ENCODE measurements at regions of chr20 and their contacts with region 1.

Region 1: GRCh38 chr20:49982346-49983122 is at the start of gene SNAI1:
- DNase-seq: peak; percentile 89
- ATAC-seq: peak; percentile 91
- H3K4me3 Mint-ChIP-seq: peak within 1 kb of the TSS; percentile 52
- H3K27ac Mint-ChIP-seq: peak within 1 kb of the TSS; percentile 26
- H3K4me1 Mint-ChIP-seq: peaks cover 15% of the 10 kb centered on the region
- H3K27me3 Mint-ChIP-seq: peaks cover 7% of the 10 kb centered on the region
- total RNA-seq, gene SNAI1: 0.25 to 0.34 TPM

Region 2: GRCh38 chr20:49936153-49937027 is 46.1 kb before region 1 on chr20 and contains the start of gene RNF114:
- CTCF ChIA-PET with region 1: interaction called, 8 read pairs
- POLR2A ChIA-PET with region 1: no interaction called
- intact Hi-C with region 1: loop called in 1 of 2 experiments (anchors 1 kb)
- DNase-seq: peak; percentile 96
- ATAC-seq: peak; percentile 93
- H3K4me3 Mint-ChIP-seq: peak within 1 kb of the TSS; percentile 85
- H3K27ac Mint-ChIP-seq: peak within 1 kb of the TSS; percentile 85
- H3K4me1 Mint-ChIP-seq: peaks cover 41% of the 10 kb centered on the region
- H3K27me3 Mint-ChIP-seq: no peaks in the 10 kb centered on the region
- total RNA-seq, gene RNF114: 47.5 to 66.6 TPM

Region 3: DNA sequence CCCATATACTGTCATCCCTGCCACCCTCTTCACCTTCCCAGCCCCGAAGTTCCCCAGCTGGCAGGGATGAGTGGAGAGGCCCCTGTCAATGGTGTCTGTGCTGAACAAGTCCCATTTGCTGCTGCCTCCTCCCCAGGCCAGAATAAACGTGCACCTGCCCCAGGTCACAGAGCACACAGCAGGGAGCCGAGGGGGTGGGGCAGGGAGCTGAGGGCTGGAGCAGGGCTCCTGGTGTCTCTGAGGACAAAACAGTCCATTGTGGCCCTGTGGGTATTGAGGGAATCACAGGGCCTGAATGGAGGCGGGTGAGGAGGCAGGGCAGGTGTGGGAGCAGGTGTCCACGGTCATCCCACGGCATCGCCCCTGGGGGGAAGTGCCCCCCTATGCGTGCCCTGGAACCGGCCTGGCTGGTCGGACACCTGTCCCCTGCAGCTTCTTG is 56.1 kb after region 1 on chr20:
- CTCF ChIA-PET with region 1: interaction called, 10 read pairs
- POLR2A ChIA-PET with region 1: no interaction called
- intact Hi-C with region 1: no loop called
- DNase-seq: no peak
- ATAC-seq: no peak
- H3K4me3 Mint-ChIP-seq: no peak overlapping the region
- H3K27ac Mint-ChIP-seq: no peak overlapping the region
- H3K4me1 Mint-ChIP-seq: peaks cover 2% of the 10 kb centered on the region
- H3K27me3 Mint-ChIP-seq: no peaks in the 10 kb centered on the region

Region 4: DNA sequence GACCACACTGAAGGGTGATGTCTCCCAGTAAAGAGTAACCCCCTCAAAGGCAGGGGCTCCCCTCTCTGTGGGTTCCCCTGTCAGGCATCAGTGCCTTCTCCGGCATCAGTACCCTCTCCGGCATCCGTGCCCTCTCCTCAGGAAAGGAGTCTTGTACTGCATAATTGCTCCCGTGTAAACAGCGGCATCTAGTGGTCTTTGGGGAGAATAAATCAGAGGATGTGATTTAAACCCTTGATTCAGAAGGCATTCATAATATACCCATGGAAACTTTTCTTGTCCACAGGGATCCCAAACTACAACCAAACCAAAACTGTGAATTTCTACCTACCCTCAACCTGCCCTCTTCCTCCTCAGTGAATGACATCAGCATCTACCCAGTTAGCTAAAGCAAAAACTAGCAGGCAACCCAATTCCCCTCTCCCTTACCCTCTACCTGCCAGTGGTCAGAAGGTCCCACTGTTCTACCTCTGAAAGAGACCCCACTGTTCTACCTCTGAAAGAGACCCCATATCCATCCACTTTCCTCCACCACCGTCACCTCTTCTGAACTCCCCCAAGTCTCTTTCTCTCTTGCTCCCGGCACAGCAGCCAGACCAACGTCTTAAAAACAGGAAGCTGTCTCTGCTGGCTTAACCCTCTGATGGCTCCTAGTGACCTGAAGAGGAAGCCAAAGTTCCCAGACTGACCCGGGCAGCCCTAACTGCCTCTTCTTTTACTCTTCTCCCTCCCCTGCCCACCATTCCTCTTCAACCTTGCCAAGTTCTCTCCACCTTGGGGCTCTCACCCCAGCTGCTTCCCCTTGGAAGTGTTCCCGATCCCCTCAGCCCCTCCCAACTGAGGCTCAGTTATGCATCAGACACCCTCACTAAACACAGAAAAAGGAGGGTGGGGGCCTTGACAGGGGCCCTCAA is 103.2 kb after region 1 on chr20:
- CTCF ChIA-PET with region 1: interaction called, 41 read pairs
- POLR2A ChIA-PET with region 1: no interaction called
- intact Hi-C with region 1: loop called in 1 of 2 experiments (anchors 1 kb)
- DNase-seq: peak; percentile 58
- ATAC-seq: peak; percentile 92
- H3K4me3 Mint-ChIP-seq: peak overlapping the region; percentile 1
- H3K27ac Mint-ChIP-seq: peak overlapping the region; percentile 51
- H3K4me1 Mint-ChIP-seq: peaks cover 33% of the 10 kb centered on the region
- H3K27me3 Mint-ChIP-seq: no peaks in the 10 kb centered on the region

Region 5: GRCh38 chr20:50153485-50154377 is 171.2 kb after region 1 on chr20 and contains the start of gene PEDS1:
- CTCF ChIA-PET with region 1: no interaction called
- POLR2A ChIA-PET with region 1: no interaction called
- intact Hi-C with region 1: loop called in 1 of 2 experiments (anchors 1 kb)
- DNase-seq: peak; percentile 91
- ATAC-seq: peak; percentile 98
- H3K4me3 Mint-ChIP-seq: peak within 1 kb of the TSS; percentile 75
- H3K27ac Mint-ChIP-seq: peak within 1 kb of the TSS; percentile 88
- H3K4me1 Mint-ChIP-seq: peaks cover 36% of the 10 kb centered on the region
- H3K27me3 Mint-ChIP-seq: no peaks in the 10 kb centered on the region
- total RNA-seq, gene PEDS1: 13.2 to 16.8 TPM

Region 6: GRCh38 chr20:50179507-50180016 is 197.0 kb after region 1 on chr20:
- CTCF ChIA-PET with region 1: interaction called, 20 read pairs
- POLR2A ChIA-PET with region 1: no interaction called
- intact Hi-C with region 1: loop called in 1 of 2 experiments (anchors 1 kb)
- DNase-seq: no peak
- ATAC-seq: no peak
- H3K4me3 Mint-ChIP-seq: no peak overlapping the region
- H3K27ac Mint-ChIP-seq: no peak overlapping the region
- H3K4me1 Mint-ChIP-seq: no peaks in the 10 kb centered on the region
- H3K27me3 Mint-ChIP-seq: peaks cover 8% of the 10 kb centered on the region

Region 7: GRCh38 chr20:50588034-50588611 is 605.6 kb after region 1 on chr20:
- CTCF ChIA-PET with region 1: no interaction called
- POLR2A ChIA-PET with region 1: no interaction called
- intact Hi-C with region 1: no loop called
- DNase-seq: peak; percentile 89
- ATAC-seq: peak; percentile 75
- H3K4me3 Mint-ChIP-seq: no peak overlapping the region
- H3K27ac Mint-ChIP-seq: no peak overlapping the region
- H3K4me1 Mint-ChIP-seq: peaks cover 3% of the 10 kb centered on the region
- H3K27me3 Mint-ChIP-seq: no peaks in the 10 kb centered on the region